ENCODE measurements at regions of chr1 and their contacts with region 1.

Region 1: DNA sequence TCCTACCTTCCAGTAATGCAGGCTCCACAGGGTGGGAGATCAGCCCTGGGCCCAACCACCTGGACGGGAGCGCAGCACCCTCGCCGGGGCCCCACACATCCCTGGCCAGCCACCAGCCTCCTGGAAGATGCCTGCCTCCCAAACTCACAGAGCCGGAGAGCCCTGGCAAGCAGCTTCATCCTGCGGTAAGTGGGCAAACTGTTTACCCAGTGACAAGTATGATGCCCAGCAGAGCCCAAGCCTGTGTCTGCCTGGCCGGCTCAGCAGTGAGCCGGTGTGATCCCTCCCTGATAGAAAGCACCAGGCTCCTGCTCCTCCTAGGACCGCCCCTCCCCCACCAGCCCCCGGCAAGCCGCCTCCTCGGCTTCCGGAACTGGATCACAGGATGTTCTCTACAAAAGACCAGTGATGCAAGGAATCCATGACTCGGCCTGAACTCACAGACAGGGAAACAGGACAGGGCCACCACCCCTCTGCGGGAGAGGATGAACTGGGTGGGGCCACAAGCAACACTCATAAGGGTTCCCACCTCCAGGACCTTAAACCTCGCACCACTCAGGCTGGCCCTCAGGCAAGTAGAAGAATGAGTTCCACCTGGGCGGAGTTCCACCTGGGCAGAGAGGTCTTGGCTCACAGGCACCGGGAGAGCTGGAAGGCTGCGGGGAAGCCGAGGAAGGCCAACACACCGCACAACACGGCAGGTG is 7.9 kb downstream of the ACOT7 start:
- DNase-seq: no peak
- ATAC-seq: no peak
- H3K4me3 ChIP-seq: no peak overlapping the region
- H3K4me3 Mint-ChIP-seq: no peak overlapping the region
- H3K27ac ChIP-seq: no peak overlapping the region
- H3K27ac Mint-ChIP-seq: no peak overlapping the region
- H3K4me1 ChIP-seq: peaks cover 0 to 3% of the 10 kb centered on the region in 2 experiments
- H3K4me1 Mint-ChIP-seq: peaks cover 0 to 2% (median 0%) of the 10 kb centered on the region in 3 donors
- H3K27me3 ChIP-seq: no peaks in the 10 kb centered on the region
- H3K27me3 Mint-ChIP-seq: no peaks in the 10 kb centered on the region

Region 2: GRCh38 chr1:6245086-6245868 is 140.4 kb before region 1 on chr1:
- CTCF ChIA-PET with region 1: no interaction called
- POLR2A ChIA-PET with region 1: no interaction called
- DNase-seq: peak; percentile 45 to 90 (median 66)
- ATAC-seq: peak; percentile 70 to 79 (median 74)
- H3K4me3 ChIP-seq: no peak overlapping the region
- H3K4me3 Mint-ChIP-seq: peak overlapping the region in 1 of 3 donors; percentile 37
- H3K27ac ChIP-seq: no peak overlapping the region
- H3K27ac Mint-ChIP-seq: no peak overlapping the region
- H3K4me1 ChIP-seq: peaks cover 3 to 38% of the 10 kb centered on the region in 2 experiments
- H3K4me1 Mint-ChIP-seq: peaks cover 13 to 24% (median 13%) of the 10 kb centered on the region in 3 donors
- H3K27me3 ChIP-seq: peaks cover 18 to 88% of the 10 kb centered on the region in 2 experiments
- H3K27me3 Mint-ChIP-seq: peaks cover 32 to 65% of the 10 kb centered on the region in 2 donors

Region 3: GRCh38 chr1:6359216-6360116 is 26.2 kb before region 1 on chr1:
- CTCF ChIA-PET with region 1: no interaction called
- POLR2A ChIA-PET with region 1: no interaction called
- DNase-seq: peak in 29 of 35 experiments; percentile 11 to 72 (median 34)
- ATAC-seq: peak; percentile 54 to 84 (median 73)
- H3K4me3 ChIP-seq: peak overlapping the region; percentile 37 to 66
- H3K4me3 Mint-ChIP-seq: peak overlapping the region; percentile 63 to 79 (median 70)
- H3K27ac ChIP-seq: peak overlapping the region; percentile 92
- H3K27ac Mint-ChIP-seq: peak overlapping the region; percentile 94 to 96
- H3K4me1 ChIP-seq: peaks cover 18 to 54% of the 10 kb centered on the region in 2 experiments
- H3K4me1 Mint-ChIP-seq: peaks cover 47 to 56% (median 55%) of the 10 kb centered on the region in 3 donors
- H3K27me3 ChIP-seq: peaks cover 0 to 2% of the 10 kb centered on the region in 2 experiments
- H3K27me3 Mint-ChIP-seq: no peaks in the 10 kb centered on the region

Region 4: GRCh38 chr1:6447818-6448748 is 62.4 kb after region 1 on chr1:
- CTCF ChIA-PET with region 1: interaction called in 1 of 2 experiments, 3 read pairs
- POLR2A ChIA-PET with region 1: interaction called in 1 of 2 experiments, 11 read pairs
- DNase-seq: peak in 31 of 35 experiments; percentile 28 to 68 (median 52)
- ATAC-seq: peak; percentile 52 to 79 (median 56)
- H3K4me3 ChIP-seq: peak overlapping the region in 1 of 2 donors; percentile 37
- H3K4me3 Mint-ChIP-seq: peak overlapping the region; percentile 62 to 74 (median 64)
- H3K27ac ChIP-seq: no peak overlapping the region
- H3K27ac Mint-ChIP-seq: no peak overlapping the region
- H3K4me1 ChIP-seq: peaks cover 8 to 36% of the 10 kb centered on the region in 2 experiments
- H3K4me1 Mint-ChIP-seq: peaks cover 16 to 30% (median 19%) of the 10 kb centered on the region in 3 donors
- H3K27me3 ChIP-seq: peaks cover 5 to 92% of the 10 kb centered on the region in 2 experiments
- H3K27me3 Mint-ChIP-seq: peaks cover 32 to 54% of the 10 kb centered on the region in 2 donors

Measured in T-cell (primary cell).